ENCODE measurements at regions of chr1 and their contacts with region 1.

Region 1: GRCh38 chr1:78617615-78618026 is 2.6 kb upstream of the IFI44L start:
- DNase-seq: no peak
- ATAC-seq: peak; percentile 71
- H3K4me3 Mint-ChIP-seq: no peak overlapping the region
- H3K27ac Mint-ChIP-seq: peak overlapping the region; percentile 37
- H3K4me1 Mint-ChIP-seq: peaks cover 36% of the 10 kb centered on the region
- H3K27me3 Mint-ChIP-seq: no peaks in the 10 kb centered on the region
- CTCF ChIP-seq: no peak

Region 2: DNA sequence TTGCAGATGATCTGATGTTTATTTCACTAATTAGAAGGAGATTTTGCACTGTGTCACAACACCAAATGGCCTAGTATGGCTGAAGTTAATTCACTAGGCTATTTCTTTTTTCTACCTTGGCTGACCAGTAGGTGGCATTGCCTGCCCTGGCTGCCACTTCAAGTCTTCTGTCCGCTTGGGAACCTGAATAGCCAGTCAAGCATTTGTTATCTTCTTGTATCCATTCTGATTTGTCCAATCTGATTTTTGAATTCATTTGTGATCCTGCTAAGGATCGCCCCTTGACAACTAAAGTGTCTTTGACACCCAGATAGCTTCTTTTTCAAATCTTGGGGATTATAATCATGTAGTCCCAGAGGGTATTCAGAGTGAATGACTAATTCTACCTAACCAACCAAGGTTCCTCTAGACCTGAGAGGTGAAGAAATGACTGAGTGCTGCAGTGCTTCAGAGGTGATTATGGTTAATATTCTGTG is 472.5 kb before region 1 on chr1:
- CTCF ChIA-PET with region 1: no interaction called
- POLR2A ChIA-PET with region 1: interaction called, 6 read pairs
- intact Hi-C with region 1: loop called (anchors 5 kb)
- DNase-seq: no peak
- ATAC-seq: peak; percentile 67
- H3K4me3 Mint-ChIP-seq: no peak overlapping the region
- H3K27ac Mint-ChIP-seq: no peak overlapping the region
- H3K4me1 Mint-ChIP-seq: peaks cover 28% of the 10 kb centered on the region
- H3K27me3 Mint-ChIP-seq: peaks cover 9% of the 10 kb centered on the region
- CTCF ChIP-seq: peak; percentile 86

Region 3: GRCh38 chr1:78649628-78650027 is 32.0 kb after region 1 on chr1 and contains the start of gene IFI44:
- CTCF ChIA-PET with region 1: interaction called, 3 read pairs
- POLR2A ChIA-PET with region 1: interaction called, 5 read pairs
- intact Hi-C with region 1: loop called (anchors 1 kb)
- DNase-seq: no peak
- ATAC-seq: peak; percentile 89
- H3K4me3 Mint-ChIP-seq: peak within 1 kb of the TSS; percentile 76
- H3K27ac Mint-ChIP-seq: peak within 1 kb of the TSS; percentile 68
- H3K4me1 Mint-ChIP-seq: peaks cover 28% of the 10 kb centered on the region
- H3K27me3 Mint-ChIP-seq: no peaks in the 10 kb centered on the region
- CTCF ChIP-seq: no peak
- total RNA-seq, gene IFI44: 9.2 and 10.4 TPM in 2 replicates

Region 4: DNA sequence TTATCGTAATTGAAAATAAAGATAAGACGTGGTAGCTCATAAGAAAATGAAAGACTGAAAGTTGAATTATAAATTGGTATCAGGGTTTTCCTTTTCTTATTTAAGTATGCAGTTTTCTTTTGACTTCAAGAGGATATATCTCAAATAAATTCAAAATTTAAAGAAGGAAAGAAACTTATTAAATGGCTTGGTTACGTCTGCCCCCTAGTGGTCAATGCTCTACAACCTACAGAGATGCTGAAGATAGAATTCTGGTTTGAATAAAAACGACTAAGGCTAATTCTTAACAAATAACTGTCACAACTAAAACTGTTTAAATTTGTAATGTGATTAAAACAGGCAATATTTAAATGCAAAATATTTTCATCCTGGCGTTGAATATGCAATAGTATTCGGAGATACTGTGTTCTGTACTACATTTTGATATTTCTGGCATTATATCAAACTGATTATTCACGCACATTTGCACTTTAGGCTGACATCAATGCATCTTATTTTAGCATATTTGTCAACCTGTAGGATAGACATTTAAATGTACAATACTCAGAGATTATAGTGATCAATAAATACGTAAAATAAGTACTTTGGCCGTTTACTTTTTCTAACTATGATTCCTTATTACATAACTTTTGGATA is 58.8 kb after region 1 on chr1:
- CTCF ChIA-PET with region 1: interaction called, 26 read pairs
- POLR2A ChIA-PET with region 1: no interaction called
- intact Hi-C with region 1: loop called (anchors 1 kb)
- DNase-seq: no peak
- ATAC-seq: no peak
- H3K4me3 Mint-ChIP-seq: no peak overlapping the region
- H3K27ac Mint-ChIP-seq: no peak overlapping the region
- H3K4me1 Mint-ChIP-seq: no peaks in the 10 kb centered on the region
- H3K27me3 Mint-ChIP-seq: no peaks in the 10 kb centered on the region
- CTCF ChIP-seq: peak; percentile 60

Region 5: DNA sequence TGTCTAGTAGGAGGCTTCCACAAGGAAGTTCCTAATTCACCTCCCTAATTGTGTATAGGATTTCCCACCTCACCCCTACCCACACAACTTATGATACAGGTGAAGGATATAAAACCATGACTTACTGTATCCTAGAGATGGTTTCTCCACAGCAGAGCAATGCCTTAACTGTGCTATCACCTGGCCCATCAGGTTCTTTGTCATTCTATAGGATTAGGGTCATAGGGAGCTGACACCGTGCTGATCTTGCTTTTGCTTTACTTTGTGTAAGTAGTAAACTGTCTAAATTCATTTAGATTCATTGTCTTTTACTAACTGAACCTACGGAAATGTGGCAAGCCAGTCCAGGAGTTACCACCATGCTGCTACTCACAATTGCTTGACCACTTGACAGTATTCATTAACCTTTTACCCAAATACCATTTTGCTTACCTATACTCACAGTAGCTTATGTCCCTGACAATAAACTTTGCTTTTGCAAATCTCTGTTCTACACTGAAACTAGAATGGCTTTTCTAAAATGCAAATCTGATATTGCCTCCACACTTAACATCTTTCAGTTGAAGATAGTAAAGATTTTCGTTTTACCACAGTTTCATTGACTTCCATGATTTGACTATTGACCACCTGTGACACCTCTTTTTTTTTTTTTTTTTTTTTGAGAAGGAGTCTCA is 179.6 kb after region 1 on chr1:
- CTCF ChIA-PET with region 1: no interaction called
- POLR2A ChIA-PET with region 1: no interaction called
- intact Hi-C with region 1: no loop called
- DNase-seq: no peak
- ATAC-seq: no peak
- H3K4me3 Mint-ChIP-seq: no peak overlapping the region
- H3K27ac Mint-ChIP-seq: no peak overlapping the region
- H3K4me1 Mint-ChIP-seq: no peaks in the 10 kb centered on the region
- H3K27me3 Mint-ChIP-seq: no peaks in the 10 kb centered on the region
- CTCF ChIP-seq: no peak

Region 6: DNA sequence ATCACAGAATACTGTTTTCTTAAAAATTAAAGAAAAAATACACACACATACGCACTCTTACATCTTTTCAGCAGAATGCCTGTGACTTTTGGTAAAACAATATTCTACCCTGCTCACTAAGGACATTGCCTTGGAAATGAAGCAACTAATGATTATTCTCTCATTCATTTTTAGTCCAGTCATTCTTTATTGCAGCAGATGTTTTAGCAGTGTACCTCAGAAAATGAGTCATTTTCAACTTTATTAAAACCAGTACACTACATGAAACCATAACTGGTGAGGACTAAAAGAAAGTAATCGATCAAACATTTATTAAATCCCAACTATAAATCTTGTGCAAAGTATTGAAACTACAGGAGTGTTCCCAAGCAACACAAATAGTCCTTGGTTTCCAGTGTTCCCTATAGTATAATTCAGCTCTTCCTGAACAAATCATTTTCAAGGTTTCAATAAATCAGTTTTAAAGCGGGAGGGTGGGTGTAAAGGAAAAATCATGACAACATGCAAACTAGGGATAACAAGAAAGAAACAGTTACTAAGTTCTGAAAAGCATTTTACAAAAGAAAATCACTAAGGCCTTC is 274.7 kb after region 1 on chr1:
- CTCF ChIA-PET with region 1: no interaction called
- POLR2A ChIA-PET with region 1: no interaction called
- intact Hi-C with region 1: no loop called
- DNase-seq: no peak
- ATAC-seq: no peak
- H3K4me3 Mint-ChIP-seq: no peak overlapping the region
- H3K27ac Mint-ChIP-seq: no peak overlapping the region
- H3K4me1 Mint-ChIP-seq: no peaks in the 10 kb centered on the region
- H3K27me3 Mint-ChIP-seq: no peaks in the 10 kb centered on the region
- CTCF ChIP-seq: no peak

Region 7: DNA sequence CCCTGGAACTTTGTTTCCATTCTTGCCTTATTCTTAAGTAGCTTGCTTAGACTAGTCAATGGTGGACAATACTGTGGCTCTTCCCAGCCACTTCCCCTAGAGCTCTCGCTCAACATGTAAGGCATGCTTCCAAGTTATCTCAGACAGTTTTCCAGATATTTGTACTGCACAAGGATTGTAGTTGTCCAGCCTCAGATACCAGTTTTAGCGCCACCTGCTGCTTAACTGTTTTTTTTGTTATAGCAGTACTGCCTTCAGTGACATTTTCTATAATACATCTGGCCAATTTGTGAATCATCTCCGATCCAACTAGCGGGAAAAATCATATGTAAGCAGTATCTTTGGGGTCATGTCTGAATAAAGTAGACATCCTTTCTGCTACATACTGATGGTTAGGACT is 735.6 kb after region 1 on chr1:
- CTCF ChIA-PET with region 1: no interaction called
- POLR2A ChIA-PET with region 1: no interaction called
- intact Hi-C with region 1: loop called (anchors 2 kb)
- DNase-seq: no peak
- ATAC-seq: no peak
- H3K4me3 Mint-ChIP-seq: no peak overlapping the region
- H3K27ac Mint-ChIP-seq: no peak overlapping the region
- H3K4me1 Mint-ChIP-seq: no peaks in the 10 kb centered on the region
- H3K27me3 Mint-ChIP-seq: no peaks in the 10 kb centered on the region
- CTCF ChIP-seq: no peak

Measured in activated B cell treated with CpG ODN at 0.5 μM for 24 hours (primary cell).